Calu3 (cell line): ENCODE measurements at regions of chr16 and their contacts with region 1.

Region 1: DNA sequence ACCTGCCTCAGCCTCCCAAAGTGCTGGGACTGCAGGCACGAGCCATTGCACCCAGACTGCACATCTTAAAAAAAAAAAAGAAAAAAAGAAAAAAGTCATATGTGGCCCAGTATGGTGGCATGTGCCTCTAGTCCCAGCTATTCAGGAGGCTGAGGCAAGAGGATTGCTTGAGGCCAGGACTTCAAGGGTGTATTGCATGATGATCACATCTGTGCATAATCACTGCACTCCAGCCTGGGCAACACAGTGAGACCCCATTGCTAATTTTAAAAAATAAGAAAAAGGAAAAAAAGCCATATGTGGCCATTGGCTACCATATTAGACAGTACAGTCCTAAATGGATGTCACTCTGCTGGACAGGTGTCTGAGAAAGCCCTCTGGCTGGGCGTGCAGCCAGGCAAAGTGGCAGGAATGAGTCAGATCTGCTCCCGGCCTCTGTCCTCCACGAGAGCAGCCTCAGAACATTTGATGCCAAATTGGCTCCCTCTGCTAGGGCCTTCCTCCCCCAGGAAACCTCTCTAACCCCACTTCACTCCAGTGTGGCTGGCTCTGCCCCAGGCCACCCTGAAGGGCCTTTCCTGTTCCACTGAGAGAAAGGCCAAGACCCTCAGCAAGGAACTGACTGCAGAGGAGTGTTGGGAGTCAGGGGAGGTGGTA is 14.7 kb downstream of the CA7 start:
- DNase-seq: peak; percentile 72
- H3K4me3 Mint-ChIP-seq: no peak overlapping the region
- H3K27ac Mint-ChIP-seq: no peak overlapping the region
- H3K4me1 Mint-ChIP-seq: no peaks in the 10 kb centered on the region
- H3K27me3 Mint-ChIP-seq: peaks cover 22% of the 10 kb centered on the region
- CTCF ChIP-seq: no peak

Region 2: DNA sequence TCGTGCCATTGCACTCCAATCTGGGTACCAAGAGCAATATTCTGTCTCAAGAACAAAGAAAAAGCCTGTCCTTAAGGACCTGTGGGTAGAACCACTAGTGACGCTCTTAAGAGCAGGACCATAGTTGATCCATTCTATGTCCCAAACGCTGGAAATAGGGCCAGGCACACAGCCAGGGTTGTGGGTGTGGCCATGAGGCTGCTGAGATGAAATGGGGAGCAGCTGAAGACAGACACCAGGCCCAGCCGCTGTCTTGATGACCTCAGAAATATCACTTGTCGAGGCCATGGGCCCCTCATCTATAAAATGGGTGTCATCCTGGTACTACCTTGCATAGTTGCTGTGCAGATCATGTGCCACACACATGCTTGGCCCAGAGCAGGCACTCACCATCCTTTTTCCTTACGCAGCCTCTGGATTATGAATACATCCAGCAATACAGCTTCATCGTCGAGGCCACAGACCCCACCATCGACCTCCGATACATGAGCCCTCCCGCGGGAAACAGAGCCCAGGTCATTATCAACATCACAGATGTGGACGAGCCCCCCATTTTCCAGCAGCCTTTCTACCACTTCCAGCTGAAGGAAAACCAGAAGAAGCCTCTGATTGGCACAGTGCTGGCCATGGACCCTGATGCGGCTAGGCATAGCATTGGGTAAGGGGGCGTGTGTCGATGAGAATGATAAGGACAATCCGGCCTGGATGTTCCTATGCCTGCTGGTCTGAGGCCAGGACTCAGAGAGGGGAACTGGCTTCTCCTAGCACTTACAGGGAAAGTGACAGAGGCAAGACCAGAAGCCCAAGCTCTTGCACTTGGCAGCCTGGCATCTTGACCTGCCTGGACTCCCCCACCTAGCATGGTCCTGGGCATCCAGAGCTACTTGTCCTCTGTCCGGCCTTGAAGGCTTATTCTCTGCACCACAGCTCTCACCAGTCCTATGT is 466.9 kb before region 1 on chr16:
- CTCF ChIA-PET with region 1: interaction called, 15 read pairs
- intact Hi-C with region 1: no loop called
- DNase-seq: no peak
- H3K4me3 Mint-ChIP-seq: no peak overlapping the region
- H3K27ac Mint-ChIP-seq: no peak overlapping the region
- H3K4me1 Mint-ChIP-seq: no peaks in the 10 kb centered on the region
- H3K27me3 Mint-ChIP-seq: peaks cover 47% of the 10 kb centered on the region
- CTCF ChIP-seq: no peak